Activated naive CD4-positive, alpha-beta T cell treated with anti-CD3 and anti-CD28 coated beads for 36 hours (primary cell): ENCODE measurements at regions of chr6 and their contacts with region 1.

Region 1: DNA sequence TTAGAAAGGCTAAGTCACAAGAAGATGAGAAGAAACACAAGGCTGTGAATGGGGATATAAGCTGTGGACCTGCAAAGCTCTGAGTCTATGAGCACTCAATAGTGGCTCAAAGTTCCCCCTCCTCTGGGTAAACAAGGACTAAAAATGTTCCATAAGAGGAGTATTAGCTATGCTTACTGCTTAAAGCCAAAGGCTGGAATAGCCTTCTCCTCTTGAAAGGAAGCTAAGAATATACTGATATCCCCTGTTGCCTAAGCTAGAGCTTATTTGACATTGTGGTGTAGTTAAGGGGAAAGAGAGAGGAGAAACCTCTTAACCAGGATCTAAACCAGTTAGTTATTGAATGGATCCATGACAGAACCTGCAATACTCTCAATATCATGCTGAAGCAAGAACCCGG is 45.8 kb downstream of the NOL7 start:
- DNase-seq: no peak
- H3K4me3 Mint-ChIP-seq: no peak overlapping the region
- H3K27ac Mint-ChIP-seq: no peak overlapping the region
- H3K4me1 Mint-ChIP-seq: peaks cover 67% of the 10 kb centered on the region
- H3K27me3 Mint-ChIP-seq: no peaks in the 10 kb centered on the region

Region 2: DNA sequence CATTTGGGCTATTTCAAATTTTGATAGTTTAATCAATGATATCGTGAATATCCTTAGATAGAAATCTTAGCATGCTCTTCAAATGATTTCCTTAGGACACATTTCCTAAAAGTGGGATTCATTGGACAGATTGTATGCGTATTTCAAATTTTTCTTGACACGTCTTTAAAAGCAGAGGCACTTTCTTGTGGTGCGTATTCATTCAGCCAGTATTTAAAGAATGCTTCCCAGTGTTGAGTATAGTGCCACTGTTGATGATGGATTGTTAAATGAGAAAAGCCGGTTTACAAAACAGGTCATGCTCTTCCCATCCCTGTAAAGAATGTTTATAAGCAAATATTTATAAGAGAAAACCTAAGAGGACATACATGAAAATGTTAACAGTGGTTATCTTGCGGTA is 60.9 kb before region 1 on chr6:
- CTCF ChIA-PET with region 1: no interaction called
- intact Hi-C with region 1: no loop called
- DNase-seq: no peak
- H3K4me3 Mint-ChIP-seq: no peak overlapping the region
- H3K27ac Mint-ChIP-seq: no peak overlapping the region
- H3K4me1 Mint-ChIP-seq: no peaks in the 10 kb centered on the region
- H3K27me3 Mint-ChIP-seq: no peaks in the 10 kb centered on the region

Region 3: DNA sequence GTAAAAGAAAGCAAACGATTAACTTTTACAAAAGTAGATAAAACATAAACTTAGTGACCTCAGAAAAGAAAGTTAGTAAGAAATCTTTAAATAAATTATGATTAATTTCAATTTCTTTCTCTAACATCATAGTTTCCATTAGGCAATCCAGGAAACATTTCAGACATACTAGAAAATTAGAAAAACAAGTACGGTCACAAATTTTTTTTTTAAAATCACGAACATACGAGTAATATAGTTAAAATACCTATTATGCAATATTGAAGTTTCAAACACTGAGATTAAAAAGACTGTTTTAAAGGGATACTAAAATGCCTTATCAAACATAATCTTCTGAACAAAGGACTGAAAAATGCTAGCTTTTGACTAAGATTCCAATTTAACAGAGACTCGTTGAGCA is 19.6 kb before region 1 on chr6:
- CTCF ChIA-PET with region 1: no interaction called
- intact Hi-C with region 1: loop called (anchors 2 kb)
- DNase-seq: no peak
- H3K4me3 Mint-ChIP-seq: no peak overlapping the region
- H3K27ac Mint-ChIP-seq: peak overlapping the region; percentile 89
- H3K4me1 Mint-ChIP-seq: peaks cover 46% of the 10 kb centered on the region
- H3K27me3 Mint-ChIP-seq: no peaks in the 10 kb centered on the region